ENCODE measurements at regions of chr14 and their contacts with region 1.

Region 1: DNA sequence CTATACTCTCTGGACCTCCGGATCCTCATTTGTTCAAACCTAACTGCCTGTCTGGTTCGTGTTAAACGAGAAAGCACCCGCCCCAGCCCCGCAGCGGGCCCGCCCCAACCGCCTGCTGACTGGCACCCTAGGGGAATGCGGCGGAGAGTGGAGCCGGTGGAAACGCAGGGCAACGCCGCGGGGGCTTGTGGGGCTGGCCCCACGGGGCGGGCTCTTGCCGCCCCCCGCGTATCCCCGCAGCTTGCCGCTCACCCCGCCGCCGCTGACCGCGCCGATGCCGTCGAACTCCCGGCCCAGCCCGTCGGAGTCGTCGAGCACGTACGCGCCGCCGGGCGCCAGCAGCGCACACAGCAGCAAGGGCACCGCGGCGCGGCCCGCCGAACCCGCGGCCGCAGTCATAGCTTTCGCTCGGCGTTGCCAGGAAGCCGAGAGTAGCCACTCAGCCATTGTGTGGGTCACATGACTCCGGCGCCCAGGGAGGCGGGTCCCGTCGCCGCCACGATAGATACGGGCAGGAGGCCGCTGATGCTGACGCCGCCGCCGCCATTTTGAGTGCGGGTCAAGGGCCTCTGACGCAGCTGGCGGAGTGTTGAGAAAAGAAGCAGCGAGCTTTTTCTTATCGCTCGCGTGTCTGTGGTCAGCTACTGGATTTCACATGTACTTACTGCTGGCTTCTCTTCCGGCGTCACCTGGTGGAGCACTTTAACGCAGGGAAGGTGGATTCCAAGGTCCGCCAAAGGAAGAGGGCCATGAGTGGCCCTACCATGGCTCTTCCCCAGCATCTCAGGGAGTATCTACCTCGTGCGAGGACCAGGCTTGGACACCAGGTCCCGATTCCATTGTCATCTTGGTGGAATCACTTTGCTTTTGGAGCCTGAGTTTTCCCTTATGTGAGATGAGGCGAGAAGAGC is at the start of gene GALC:
- DNase-seq: peak; percentile 94
- H3K4me3 Mint-ChIP-seq: peak within 1 kb of the TSS; percentile 93
- H3K27ac Mint-ChIP-seq: peak within 1 kb of the TSS; percentile 93
- H3K4me1 Mint-ChIP-seq: peaks cover 54% of the 10 kb centered on the region
- H3K27me3 Mint-ChIP-seq: no peaks in the 10 kb centered on the region
- total RNA-seq, gene GALC: 11.1 and 13.4 TPM in 2 replicates

Region 2: DNA sequence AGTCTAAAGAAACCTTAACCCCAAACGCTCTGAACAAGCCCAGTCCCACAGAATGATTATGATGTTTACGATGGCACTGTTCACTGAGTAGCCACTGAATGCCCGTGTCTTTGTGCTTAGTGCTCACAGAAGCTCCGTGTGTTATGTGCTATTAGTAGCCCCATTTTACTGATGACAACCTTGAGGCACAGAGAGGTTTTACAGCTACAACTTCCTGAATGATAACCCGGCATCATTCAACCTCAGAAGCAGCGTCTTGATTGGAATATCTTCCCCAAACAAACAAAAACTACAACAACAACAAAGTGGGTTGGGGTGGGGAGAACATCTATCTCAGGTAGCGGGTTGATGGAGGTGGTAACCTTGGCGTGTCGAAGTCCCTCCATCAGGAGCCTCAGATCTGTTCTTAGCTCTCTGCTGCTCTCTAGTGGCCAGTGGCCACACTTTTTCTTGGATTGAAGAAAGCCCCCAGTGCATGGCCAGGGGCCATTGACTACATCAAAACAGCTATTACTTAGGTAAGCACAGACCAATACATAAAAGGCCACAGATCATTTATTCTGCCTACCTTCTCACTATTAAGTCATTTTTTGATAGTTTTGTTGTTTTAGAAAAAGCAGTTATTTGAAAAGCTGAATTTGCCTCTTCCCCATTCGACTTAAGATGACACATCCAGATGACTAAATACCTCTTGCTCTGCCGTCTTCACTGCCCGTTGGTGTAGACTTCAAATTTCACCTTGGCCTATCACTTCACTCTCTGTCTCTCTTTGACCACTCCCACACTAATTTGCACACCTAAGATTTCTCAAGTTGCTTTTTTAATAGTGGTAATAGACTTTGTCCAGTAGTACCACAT is 376.9 kb before region 1 on chr14:
- intact Hi-C with region 1: no loop called
- DNase-seq: peak; percentile 10
- H3K4me3 Mint-ChIP-seq: no peak overlapping the region
- H3K27ac Mint-ChIP-seq: no peak overlapping the region
- H3K4me1 Mint-ChIP-seq: no peaks in the 10 kb centered on the region
- H3K27me3 Mint-ChIP-seq: no peaks in the 10 kb centered on the region

Region 3: GRCh38 chr14:87852107-87852506 is 140.9 kb before region 1 on chr14:
- intact Hi-C with region 1: no loop called
- DNase-seq: no peak
- H3K4me3 Mint-ChIP-seq: no peak overlapping the region
- H3K27ac Mint-ChIP-seq: no peak overlapping the region
- H3K4me1 Mint-ChIP-seq: no peaks in the 10 kb centered on the region
- H3K27me3 Mint-ChIP-seq: peaks cover 1% of the 10 kb centered on the region

Region 4: GRCh38 chr14:87952307-87953094 is 40.5 kb before region 1 on chr14:
- intact Hi-C with region 1: loop called (anchors 5 kb)
- DNase-seq: no peak
- H3K4me3 Mint-ChIP-seq: peak overlapping the region; percentile 35
- H3K27ac Mint-ChIP-seq: peak overlapping the region; percentile 28
- H3K4me1 Mint-ChIP-seq: peaks cover 32% of the 10 kb centered on the region
- H3K27me3 Mint-ChIP-seq: no peaks in the 10 kb centered on the region

Region 5: DNA sequence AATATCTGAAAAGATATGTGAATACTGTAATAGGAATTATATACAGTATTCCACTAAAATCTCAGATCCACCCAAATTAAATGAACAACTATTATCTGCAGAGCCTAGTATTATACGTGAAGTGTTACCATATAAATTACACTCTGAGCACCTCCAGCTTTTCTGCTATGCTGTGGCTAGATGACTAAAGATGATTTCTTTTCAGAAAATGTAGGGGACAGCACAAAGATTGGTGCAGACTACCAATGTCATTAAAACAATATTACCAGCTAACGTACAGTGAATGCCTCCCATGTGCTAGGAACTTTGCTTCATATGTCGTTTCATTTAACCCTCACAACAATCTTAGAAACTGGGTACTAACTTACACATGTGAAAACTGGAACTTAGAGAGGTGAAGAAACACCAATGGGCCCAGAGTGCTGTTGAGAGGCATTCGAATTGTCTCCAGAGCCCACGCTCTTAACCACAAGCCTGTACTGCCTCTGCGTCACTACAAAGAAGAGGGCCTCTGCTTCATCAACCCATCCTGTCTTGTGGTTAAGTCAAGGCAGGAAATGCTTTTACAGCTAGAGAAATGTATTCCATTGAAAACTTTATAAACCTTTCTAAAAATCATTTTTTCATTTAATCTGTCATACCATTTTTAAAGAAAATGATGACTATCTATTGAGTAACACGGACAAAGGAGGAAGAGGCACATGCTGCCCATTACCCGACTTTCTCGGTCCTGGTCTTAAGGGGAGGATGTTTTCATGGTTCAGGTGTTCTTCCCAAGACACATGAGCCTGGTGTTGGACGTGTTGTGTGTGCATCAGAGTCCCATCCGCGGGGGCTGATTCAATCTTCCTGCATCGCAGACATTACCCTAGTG is 13.2 kb after region 1 on chr14:
- intact Hi-C with region 1: loop called (anchors 1 kb)
- DNase-seq: peak; percentile 64
- H3K4me3 Mint-ChIP-seq: peak overlapping the region; percentile 94
- H3K27ac Mint-ChIP-seq: peak overlapping the region; percentile 97
- H3K4me1 Mint-ChIP-seq: peaks cover 62% of the 10 kb centered on the region
- H3K27me3 Mint-ChIP-seq: no peaks in the 10 kb centered on the region

Region 6: GRCh38 chr14:88023658-88024187 is 30.8 kb after region 1 on chr14:
- intact Hi-C with region 1: loop called (anchors 1 kb)
- DNase-seq: no peak
- H3K4me3 Mint-ChIP-seq: peak overlapping the region; percentile 19
- H3K27ac Mint-ChIP-seq: peak overlapping the region; percentile 78
- H3K4me1 Mint-ChIP-seq: peaks cover 67% of the 10 kb centered on the region
- H3K27me3 Mint-ChIP-seq: no peaks in the 10 kb centered on the region

Region 7: DNA sequence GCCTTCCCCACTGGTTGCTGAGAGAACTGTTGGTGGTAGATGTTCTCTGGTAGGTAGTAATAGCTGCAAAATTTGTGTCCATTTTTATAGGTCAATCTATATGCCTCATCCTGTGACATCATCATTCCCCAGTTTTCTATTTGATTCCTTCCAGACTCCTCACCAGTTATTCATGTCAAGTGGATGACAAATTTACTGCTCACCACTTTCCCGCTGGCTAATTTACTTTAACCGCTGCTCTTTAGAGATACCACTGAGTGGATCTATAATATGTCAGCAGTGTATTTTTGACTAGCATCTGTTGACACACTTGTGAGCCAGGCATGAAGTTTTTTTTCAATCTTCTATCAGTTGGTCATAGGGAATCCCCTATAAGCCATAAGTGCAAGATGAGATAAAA is 36.5 kb after region 1 on chr14:
- intact Hi-C with region 1: loop called (anchors 1 kb)
- DNase-seq: no peak
- H3K4me3 Mint-ChIP-seq: peak overlapping the region; percentile 2
- H3K27ac Mint-ChIP-seq: peak overlapping the region; percentile 72
- H3K4me1 Mint-ChIP-seq: peaks cover 52% of the 10 kb centered on the region
- H3K27me3 Mint-ChIP-seq: no peaks in the 10 kb centered on the region

Region 8: DNA sequence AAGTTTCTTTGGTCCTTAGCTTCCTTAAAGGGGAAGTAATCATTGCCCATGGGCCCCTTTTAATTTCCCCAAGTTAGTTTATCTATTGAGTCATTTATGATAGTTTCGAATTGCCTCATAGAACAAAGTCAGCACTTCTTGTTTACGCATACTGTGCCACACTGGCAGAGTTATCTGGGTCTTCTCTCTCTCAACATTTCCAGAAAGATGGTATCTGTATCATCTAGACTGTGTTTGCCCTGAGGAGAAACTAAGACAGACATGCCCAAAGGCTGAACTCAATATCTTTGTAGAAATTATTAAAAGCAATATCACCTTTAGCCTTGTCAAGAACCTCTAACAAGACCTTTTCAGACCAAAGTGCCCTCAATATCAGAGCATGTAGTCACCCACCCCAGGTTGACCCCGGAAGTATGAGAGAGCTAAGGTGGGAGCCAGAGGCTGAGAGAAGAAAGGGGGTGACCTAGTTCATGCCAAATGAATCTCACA is 51.9 kb after region 1 on chr14:
- intact Hi-C with region 1: loop called (anchors 1 kb)
- DNase-seq: no peak
- H3K4me3 Mint-ChIP-seq: no peak overlapping the region
- H3K27ac Mint-ChIP-seq: peak overlapping the region; percentile 73
- H3K4me1 Mint-ChIP-seq: peaks cover 17% of the 10 kb centered on the region
- H3K27me3 Mint-ChIP-seq: no peaks in the 10 kb centered on the region

Region 9: DNA sequence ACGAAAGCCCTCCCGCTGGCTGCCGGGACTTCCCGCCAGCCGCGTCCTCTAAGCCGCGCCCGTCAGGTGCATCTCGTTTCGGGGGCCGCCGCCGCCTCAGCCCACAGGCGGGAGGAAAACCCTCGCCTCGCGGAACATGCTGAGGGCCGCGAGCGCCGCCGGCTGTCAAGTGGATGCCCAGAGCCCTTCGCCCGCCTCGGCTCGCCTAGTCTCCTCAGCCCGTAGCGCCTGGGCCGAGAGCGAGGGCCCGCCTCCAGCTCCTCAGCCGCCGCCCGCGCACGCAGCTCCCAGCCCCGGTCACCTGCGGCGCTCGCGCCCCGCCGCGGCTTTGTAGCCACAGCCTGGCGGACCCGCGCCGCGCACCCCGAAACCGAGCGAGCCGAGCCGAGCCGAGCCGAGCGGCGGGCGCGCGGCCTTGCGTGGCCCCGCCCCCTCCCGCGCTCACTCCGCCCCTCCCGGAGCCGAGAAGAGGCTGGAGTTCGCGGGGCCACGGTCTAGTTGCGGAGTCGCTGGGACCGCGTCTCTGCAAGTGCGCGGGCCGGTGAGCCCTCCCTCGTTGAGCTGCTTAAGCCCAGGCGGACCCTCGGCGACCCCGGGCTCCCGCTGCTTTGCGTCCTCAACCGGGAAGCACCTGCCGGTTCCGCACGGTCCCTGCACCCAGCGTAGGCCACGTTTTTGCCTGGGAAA is 799.7 kb after region 1 on chr14 and contains the start of gene EML5:
- intact Hi-C with region 1: loop called (anchors 10 kb)
- DNase-seq: peak; percentile 76
- H3K4me3 Mint-ChIP-seq: peak within 1 kb of the TSS; percentile 74
- H3K27ac Mint-ChIP-seq: no peak within 1 kb of the TSS
- H3K4me1 Mint-ChIP-seq: peaks cover 4% of the 10 kb centered on the region
- H3K27me3 Mint-ChIP-seq: peaks cover 37% of the 10 kb centered on the region
- total RNA-seq, gene EML5: 0.39 and 0.55 TPM in 2 replicates